ENCODE measurements at regions of chr2 and their contacts with region 1.

Region 1: DNA sequence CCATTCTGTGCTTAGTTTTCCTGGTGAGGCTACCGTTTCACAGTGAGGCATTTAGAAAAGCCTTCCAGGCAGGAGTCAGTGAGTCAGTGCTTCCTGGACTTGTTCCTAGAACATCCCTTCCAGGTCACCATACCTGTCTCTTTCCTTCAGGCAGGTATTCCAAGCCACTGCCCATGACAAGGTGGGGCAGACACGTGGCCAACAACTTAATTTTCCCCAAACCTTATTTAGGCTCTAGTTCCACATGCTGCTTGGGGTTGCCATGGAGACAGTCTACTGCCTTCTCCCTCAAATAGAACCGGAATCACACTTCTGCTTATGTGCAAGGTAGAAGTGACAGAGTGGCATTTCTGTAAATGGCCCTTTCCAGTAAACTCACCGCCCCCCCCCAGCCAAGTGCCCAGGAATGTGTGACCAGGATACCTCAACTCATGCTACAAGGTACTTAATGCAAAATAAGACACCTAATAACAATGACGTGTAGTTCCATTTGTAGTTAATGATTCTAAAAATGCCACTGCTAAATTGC is 258.3 kb downstream of the PRKCE start:
- DNase-seq: no peak
- ATAC-seq: peak; percentile 84
- H3K4me3 Mint-ChIP-seq: peak overlapping the region; percentile 53
- H3K27ac Mint-ChIP-seq: peak overlapping the region; percentile 73
- H3K4me1 Mint-ChIP-seq: peaks cover 70% of the 10 kb centered on the region
- H3K27me3 Mint-ChIP-seq: no peaks in the 10 kb centered on the region
- CTCF ChIP-seq: no peak

Region 2: DNA sequence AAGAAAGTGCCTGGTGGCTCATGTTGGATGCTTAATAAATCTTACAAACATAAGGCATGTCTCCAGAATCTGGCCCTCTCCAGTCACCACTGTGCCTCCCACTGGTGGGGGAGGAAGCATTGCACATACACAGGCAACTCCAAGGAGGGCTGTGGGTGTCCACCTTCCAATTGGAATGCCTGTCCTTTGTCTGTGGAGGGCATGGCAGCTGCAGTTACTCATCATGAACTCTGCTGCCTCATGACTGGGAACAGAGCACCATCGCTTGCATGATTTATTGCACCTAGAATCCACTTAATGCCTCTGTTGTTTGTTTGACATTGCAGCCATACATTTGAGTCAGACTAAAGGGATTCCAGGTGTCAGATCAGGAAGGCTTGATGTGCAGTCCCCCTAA is 20.7 kb after region 1 on chr2:
- CTCF ChIA-PET with region 1: no interaction called
- POLR2A ChIA-PET with region 1: no interaction called
- intact Hi-C with region 1: loop called (anchors 2 kb)
- DNase-seq: no peak
- ATAC-seq: no peak
- H3K4me3 Mint-ChIP-seq: no peak overlapping the region
- H3K27ac Mint-ChIP-seq: peak overlapping the region; percentile 79
- H3K4me1 Mint-ChIP-seq: peaks cover 26% of the 10 kb centered on the region
- H3K27me3 Mint-ChIP-seq: no peaks in the 10 kb centered on the region
- CTCF ChIP-seq: no peak

Region 3: GRCh38 chr2:46555011-46555410 is 645.3 kb after region 1 on chr2:
- CTCF ChIA-PET with region 1: no interaction called
- POLR2A ChIA-PET with region 1: no interaction called
- intact Hi-C with region 1: no loop called
- DNase-seq: no peak
- ATAC-seq: peak; percentile 56
- H3K4me3 Mint-ChIP-seq: no peak overlapping the region
- H3K27ac Mint-ChIP-seq: peak overlapping the region; percentile 71
- H3K4me1 Mint-ChIP-seq: peaks cover 97% of the 10 kb centered on the region
- H3K27me3 Mint-ChIP-seq: no peaks in the 10 kb centered on the region
- CTCF ChIP-seq: no peak

Measured in activated B cell treated with CpG ODN at 0.5 μM for 24 hours (primary cell).